MCF 10A (cell line): ENCODE measurements at regions of chr2 and their contacts with region 1.

Region 1: GRCh38 chr2:217988014-217988839 is 14.6 kb downstream of the TNS1 start:
- DNase-seq: peak; percentile 75
- H3K4me3 Mint-ChIP-seq: no peak overlapping the region
- H3K27ac Mint-ChIP-seq: no peak overlapping the region
- H3K4me1 Mint-ChIP-seq: peaks cover 7% of the 10 kb centered on the region
- H3K27me3 Mint-ChIP-seq: no peaks in the 10 kb centered on the region
- CTCF ChIP-seq: peak; percentile 93

Region 2: DNA sequence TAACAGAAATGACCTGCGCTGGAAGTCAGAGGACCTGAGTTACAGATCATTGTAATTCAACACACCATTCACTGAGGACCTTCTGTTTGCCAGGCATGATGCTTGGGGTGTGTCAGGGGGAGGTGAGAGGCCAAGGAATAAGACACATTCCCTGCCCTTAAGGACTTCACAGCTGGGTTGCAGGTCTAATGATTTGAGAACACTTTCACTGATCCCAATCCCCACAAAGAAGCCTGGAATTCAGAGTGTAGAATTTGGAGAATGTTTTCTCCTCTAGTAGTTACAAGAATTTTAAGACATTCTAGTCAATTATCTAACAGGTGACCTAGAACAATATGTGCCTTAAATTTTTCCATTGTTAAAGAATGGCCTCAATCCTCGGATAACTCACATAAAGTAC is 307.9 kb before region 1 on chr2:
- CTCF ChIA-PET with region 1: no interaction called
- POLR2A ChIA-PET with region 1: no interaction called
- intact Hi-C with region 1: no loop called
- DNase-seq: no peak
- H3K4me3 Mint-ChIP-seq: no peak overlapping the region
- H3K27ac Mint-ChIP-seq: no peak overlapping the region
- H3K4me1 Mint-ChIP-seq: peaks cover 11% of the 10 kb centered on the region
- H3K27me3 Mint-ChIP-seq: no peaks in the 10 kb centered on the region
- CTCF ChIP-seq: no peak

Region 3: DNA sequence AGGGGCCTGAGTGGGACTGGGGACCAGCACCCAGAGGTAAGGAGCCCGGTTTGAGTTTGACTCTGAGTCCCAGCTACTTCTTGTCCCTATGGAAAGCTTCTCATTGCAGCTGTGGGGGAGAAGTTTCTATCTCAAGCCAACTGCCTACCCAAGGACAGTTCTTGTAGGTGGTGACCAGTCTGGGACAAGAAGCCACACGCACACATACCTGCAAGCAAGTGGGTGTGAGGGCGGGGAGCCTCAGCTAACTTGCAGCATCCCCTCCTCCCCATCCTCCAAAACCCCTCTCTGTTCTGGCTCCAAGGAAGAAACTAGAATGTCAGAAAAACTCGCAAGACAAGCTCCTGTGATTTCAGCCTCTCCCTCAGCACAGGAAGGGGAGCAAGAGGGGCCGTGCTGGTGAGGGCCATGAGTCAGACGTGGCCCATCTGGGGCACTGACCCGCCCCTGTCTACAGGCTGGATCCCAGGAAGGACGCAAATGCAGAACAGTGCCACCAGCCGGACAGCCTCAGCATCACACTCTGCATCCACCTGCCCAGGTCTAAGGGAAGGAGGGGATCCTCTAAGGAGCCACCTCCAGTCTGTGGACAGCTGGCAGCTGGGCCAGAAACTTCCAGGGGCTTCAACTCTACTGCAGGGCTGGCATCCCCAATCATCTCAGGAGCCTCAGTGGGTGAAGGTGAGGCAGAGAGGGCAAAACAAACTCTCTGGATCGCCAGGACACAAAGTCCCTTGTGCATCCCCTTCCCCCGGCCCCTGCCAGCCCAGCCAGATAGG is 88.8 kb before region 1 on chr2:
- CTCF ChIA-PET with region 1: interaction called, 4 read pairs
- POLR2A ChIA-PET with region 1: no interaction called
- intact Hi-C with region 1: loop called (anchors 2 kb)
- DNase-seq: peak; percentile 81
- H3K4me3 Mint-ChIP-seq: no peak overlapping the region
- H3K27ac Mint-ChIP-seq: no peak overlapping the region
- H3K4me1 Mint-ChIP-seq: peaks cover 6% of the 10 kb centered on the region
- H3K27me3 Mint-ChIP-seq: no peaks in the 10 kb centered on the region
- CTCF ChIP-seq: peak; percentile 57

Region 4: GRCh38 chr2:218418717-218419458 is 430.7 kb after region 1 on chr2 and contains the start of gene VIL1:
- CTCF ChIA-PET with region 1: no interaction called
- POLR2A ChIA-PET with region 1: no interaction called
- intact Hi-C with region 1: no loop called
- DNase-seq: no peak
- H3K4me3 Mint-ChIP-seq: no peak within 1 kb of the TSS
- H3K27ac Mint-ChIP-seq: no peak within 1 kb of the TSS
- H3K4me1 Mint-ChIP-seq: no peaks in the 10 kb centered on the region
- H3K27me3 Mint-ChIP-seq: no peaks in the 10 kb centered on the region
- CTCF ChIP-seq: no peak
- total RNA-seq, gene VIL1: not detected in 2 replicates